AG04449 (cell line): ENCODE measurements at regions of chr12 and their contacts with region 1.

Region 1: GRCh38 chr12:19223018-19223417 is 93.5 kb downstream of the PLEKHA5 start:
- DNase-seq: no peak
- H3K4me3 ChIP-seq: no peak overlapping the region
- CTCF ChIP-seq: no peak

Region 2: DNA sequence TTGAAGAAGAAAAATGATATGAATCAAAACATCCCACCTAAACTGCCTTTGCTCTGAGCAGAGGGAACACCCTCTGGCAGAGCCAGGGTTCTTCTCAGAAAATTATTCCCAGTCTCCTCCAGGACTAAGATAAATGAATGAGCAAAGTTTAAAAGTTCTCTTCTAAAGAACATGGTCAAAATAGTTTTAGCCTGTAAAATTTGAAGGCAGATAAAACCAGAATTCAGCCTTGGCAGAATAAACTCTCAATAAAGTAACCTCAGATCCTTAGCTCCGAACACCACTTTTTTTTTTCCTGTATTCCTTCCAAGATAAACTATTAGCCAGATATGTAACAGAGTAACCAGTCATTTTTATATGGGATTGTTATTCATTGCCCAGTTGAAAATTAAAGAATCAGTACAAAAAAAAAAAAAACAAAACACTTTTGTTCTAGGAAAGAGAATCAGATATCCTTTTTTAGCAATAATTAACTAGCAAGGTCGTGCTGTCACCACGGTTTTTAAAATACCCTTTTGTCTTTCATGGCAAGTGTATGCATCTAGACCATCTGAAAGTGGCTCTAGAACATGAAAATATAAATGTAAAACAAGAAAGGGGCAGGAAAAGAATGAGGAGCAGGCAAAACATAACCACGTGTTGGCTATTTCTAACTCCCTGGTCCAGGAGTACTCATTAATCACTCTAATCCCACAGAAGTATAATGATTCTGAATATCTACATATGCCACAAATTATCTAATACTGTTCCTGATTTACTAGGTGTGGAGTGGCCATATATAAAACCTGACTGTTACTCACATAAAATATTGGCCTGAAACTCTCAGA is 424.3 kb before region 1 on chr12:
- CTCF ChIA-PET with region 1: no interaction called
- POLR2A ChIA-PET with region 1: no interaction called
- DNase-seq: no peak
- H3K4me3 ChIP-seq: no peak overlapping the region
- CTCF ChIP-seq: no peak

Region 3: DNA sequence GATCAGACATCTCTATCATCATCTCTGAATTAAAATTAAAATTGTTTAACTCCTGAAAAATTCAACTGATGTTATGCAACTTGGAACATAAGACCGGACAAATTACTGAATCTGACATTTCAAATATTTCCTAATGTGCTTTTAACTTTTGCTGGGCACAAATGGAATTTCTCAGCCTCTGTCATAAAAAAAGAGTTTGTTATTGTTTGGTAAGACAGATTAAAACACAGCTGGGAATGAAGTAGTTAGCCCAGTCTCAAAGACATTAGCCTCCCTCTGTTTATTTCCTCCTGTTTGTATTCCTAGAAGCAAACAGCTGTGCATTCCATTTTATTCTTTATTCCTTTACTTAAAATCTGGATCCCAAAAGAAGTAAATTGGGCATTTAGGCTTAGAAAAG is 64.1 kb before region 1 on chr12:
- CTCF ChIA-PET with region 1: no interaction called
- POLR2A ChIA-PET with region 1: no interaction called
- DNase-seq: peak; percentile 21
- H3K4me3 ChIP-seq: no peak overlapping the region
- CTCF ChIP-seq: no peak

Region 4: GRCh38 chr12:19234171-19234704 is 11.2 kb after region 1 on chr12:
- CTCF ChIA-PET with region 1: interaction called, 12 read pairs
- POLR2A ChIA-PET with region 1: no interaction called
- DNase-seq: no peak
- H3K4me3 ChIP-seq: no peak overlapping the region
- CTCF ChIP-seq: no peak